Ascending aorta (tissue), 2 donors: ENCODE measurements at regions of chr9 and their contacts with region 1.

Region 1: GRCh38 chr9:12719431-12719830 is 26.2 kb downstream of the TYRP1 start:
- DNase-seq: no peak
- H3K4me3 ChIP-seq: no peak overlapping the region
- H3K27ac ChIP-seq: no peak overlapping the region
- H3K4me1 ChIP-seq: no peaks in the 10 kb centered on the region
- H3K27me3 ChIP-seq: no peaks in the 10 kb centered on the region
- CTCF ChIP-seq: peak in 2 of 3 experiments; percentile 40 to 56

Region 2: GRCh38 chr9:12666813-12667212 is 52.6 kb before region 1 on chr9:
- intact Hi-C with region 1: no loop called
- DNase-seq: no peak
- H3K4me3 ChIP-seq: no peak overlapping the region
- H3K27ac ChIP-seq: no peak overlapping the region
- H3K4me1 ChIP-seq: no peaks in the 10 kb centered on the region
- H3K27me3 ChIP-seq: no peaks in the 10 kb centered on the region
- CTCF ChIP-seq: no peak

Region 3: GRCh38 chr9:12766357-12766756 is 46.9 kb after region 1 on chr9:
- intact Hi-C with region 1: no loop called
- DNase-seq: no peak
- H3K4me3 ChIP-seq: no peak overlapping the region
- H3K27ac ChIP-seq: no peak overlapping the region
- H3K4me1 ChIP-seq: no peaks in the 10 kb centered on the region
- H3K27me3 ChIP-seq: no peaks in the 10 kb centered on the region
- CTCF ChIP-seq: no peak

Region 4: DNA sequence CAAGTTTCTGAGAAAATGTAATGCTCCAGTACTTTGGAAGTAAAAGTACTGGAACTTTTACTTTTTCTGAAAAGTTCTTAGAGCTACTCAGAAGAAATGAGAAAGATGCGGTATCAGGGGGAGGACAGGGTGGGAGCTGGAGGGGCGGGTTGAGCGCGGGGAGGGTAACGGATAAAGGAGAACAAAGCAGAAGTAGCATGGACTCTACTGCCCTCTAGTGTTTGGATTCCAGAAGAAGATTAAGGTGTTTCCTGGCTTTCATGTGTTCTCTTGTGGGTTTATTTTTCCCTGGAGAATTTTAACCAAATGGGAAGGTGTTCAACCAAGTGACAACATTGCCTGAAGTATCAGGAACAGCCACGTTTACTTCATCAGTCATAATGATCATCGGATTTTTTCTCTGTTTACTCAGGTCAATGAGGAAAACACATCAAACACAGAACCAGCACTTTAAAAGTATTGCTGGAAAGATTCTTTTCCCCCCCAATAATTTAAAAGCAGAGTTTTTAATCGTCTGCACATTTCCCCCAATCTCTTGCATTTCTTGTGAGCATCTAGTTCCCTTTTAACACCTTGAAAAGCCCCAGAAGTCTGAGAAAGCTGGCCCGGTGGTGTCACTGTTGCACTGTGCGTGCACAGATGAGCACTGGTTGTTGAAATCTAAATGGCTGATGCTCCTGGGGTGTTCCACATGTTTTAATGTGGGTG is 369.4 kb after region 1 on chr9:
- intact Hi-C with region 1: loop called (anchors 5 kb)
- DNase-seq: no peak
- H3K4me3 ChIP-seq: peak overlapping the region in 1 of 2 donors; percentile 31
- H3K27ac ChIP-seq: no peak overlapping the region
- H3K4me1 ChIP-seq: peaks cover 0 to 7% of the 10 kb centered on the region in 2 donors
- H3K27me3 ChIP-seq: no peaks in the 10 kb centered on the region
- CTCF ChIP-seq: peak; percentile 17 to 67 (median 63)